Pancreas (tissue), 10 donors: ENCODE measurements at regions of chr2 and their contacts with region 1.

Region 1: DNA sequence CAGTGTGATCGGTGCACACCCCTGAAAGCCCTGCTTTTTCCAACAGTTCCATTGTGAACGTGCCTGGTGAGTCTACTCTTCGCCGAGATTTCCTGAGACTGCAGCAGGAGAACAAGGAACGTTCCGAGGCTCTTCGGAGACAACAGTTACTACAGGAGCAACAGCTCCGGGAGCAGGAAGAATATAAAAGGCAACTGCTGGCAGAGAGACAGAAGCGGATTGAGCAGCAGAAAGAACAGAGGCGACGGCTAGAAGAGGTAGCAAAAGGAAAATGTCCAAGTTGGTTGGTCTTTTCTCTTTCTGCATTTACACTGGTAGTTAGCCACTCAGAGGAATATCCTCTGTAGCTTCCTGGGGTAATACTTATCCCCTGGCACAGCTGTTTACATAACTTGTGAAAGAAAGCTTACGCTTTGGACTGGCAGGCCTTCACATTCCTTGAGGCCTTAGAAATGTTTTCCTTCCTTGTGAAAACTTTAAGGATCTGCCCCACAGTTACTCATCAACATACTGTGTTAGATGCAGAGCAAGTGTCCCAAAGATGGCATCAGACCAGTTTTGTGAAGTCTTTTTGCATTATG is 146.6 kb downstream of the MAP4K4 start:
- DNase-seq: no peak
- ATAC-seq: no peak
- H3K4me3 ChIP-seq: no peak overlapping the region
- H3K27ac ChIP-seq: no peak overlapping the region
- H3K4me1 ChIP-seq: no peaks in the 10 kb centered on the region
- H3K27me3 ChIP-seq: no peaks in the 10 kb centered on the region
- CTCF ChIP-seq: no peak

Region 2: GRCh38 chr2:101419096-101419663 is 425.0 kb before region 1 on chr2:
- intact Hi-C with region 1: loop called in 1 of 3 experiments (anchors 10 kb)
- DNase-seq: peak in 3 of 6 donors; percentile 20 to 42 (median 42)
- ATAC-seq: peak in 3 of 4 donors; percentile 79 to 87 (median 85)
- H3K4me3 ChIP-seq: no peak overlapping the region
- H3K27ac ChIP-seq: no peak overlapping the region
- H3K4me1 ChIP-seq: no peaks in the 10 kb centered on the region
- H3K27me3 ChIP-seq: no peaks in the 10 kb centered on the region
- CTCF ChIP-seq: peak in 3 of 4 donors; percentile 36 to 62 (median 50)

Region 3: DNA sequence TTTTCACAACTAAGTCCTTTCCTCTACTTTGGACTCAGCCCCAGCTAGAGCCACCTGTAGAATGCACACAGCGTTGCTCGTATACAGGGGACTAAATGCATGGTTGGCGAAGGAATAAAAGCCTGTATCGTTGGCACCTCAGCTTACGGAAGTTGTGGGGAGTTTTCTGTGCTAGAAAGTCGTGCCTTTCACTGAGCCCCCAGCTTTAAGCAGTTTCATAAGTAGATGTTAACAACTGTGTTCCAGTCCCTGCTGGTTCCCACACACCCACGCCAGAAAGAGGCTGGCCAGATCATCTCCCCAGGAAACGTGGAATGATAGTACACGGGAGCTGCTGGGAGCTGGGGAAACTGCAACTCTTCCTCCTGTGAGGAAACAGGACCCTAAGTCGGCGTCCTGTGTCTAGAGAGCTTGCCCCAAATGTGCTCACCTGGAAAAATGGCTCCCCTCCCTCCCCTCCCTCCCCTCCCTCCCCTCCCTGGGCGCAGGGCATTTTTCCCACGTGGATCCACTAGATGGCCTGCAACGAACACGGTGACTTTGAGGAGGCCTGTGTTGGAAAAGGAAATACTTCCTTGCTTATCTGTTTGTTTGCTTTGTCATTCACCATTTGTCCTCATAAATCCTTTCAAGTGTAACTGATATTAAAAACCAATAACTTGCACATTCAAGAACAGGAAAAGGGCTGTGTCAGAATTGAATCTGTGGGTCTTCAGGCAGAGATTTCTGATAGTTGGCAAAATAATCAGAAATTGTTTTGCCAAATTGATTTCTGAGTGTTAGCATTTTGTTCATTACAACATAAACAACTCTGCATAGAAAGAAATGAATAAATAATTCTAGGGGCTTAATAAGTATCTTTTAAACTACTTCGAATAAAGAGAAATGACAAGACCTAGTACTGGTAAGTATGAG is 325.3 kb before region 1 on chr2:
- intact Hi-C with region 1: loop called in 1 of 3 experiments (anchors 10 kb)
- DNase-seq: peak in 5 of 6 donors; percentile 41 to 67 (median 52)
- ATAC-seq: peak; percentile 89 to 94 (median 90)
- H3K4me3 ChIP-seq: no peak overlapping the region
- H3K27ac ChIP-seq: no peak overlapping the region
- H3K4me1 ChIP-seq: no peaks in the 10 kb centered on the region
- H3K27me3 ChIP-seq: no peaks in the 10 kb centered on the region
- CTCF ChIP-seq: peak in 3 of 4 donors; percentile 15 to 20 (median 18)

Region 4: DNA sequence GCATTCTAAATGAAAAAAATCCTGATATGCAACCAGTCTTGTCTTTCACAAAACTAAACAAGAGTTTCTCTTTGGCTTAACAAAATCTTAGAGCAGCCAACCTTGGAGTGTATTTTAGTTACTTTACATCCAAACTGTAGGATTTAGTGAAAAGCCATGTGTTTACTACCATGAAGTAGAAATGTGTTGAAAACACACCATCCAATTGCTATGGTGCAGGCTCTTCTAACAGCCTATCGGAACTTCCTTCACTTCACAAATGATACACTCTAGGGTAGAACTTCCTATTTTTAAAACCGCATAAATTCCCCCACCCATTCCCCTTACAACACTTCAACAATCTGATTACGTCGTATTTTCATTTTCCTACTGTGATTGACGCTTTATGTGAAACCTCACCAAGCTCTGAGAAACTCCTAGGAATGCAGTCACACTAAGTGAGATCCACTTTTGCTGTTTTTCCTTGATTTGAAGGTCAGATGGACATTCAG is 221.1 kb before region 1 on chr2:
- intact Hi-C with region 1: no loop called
- DNase-seq: no peak
- ATAC-seq: peak in 2 of 4 donors; percentile 58 to 66
- H3K4me3 ChIP-seq: no peak overlapping the region
- H3K27ac ChIP-seq: no peak overlapping the region
- H3K4me1 ChIP-seq: no peaks in the 10 kb centered on the region
- H3K27me3 ChIP-seq: no peaks in the 10 kb centered on the region
- CTCF ChIP-seq: no peak

Region 5: DNA sequence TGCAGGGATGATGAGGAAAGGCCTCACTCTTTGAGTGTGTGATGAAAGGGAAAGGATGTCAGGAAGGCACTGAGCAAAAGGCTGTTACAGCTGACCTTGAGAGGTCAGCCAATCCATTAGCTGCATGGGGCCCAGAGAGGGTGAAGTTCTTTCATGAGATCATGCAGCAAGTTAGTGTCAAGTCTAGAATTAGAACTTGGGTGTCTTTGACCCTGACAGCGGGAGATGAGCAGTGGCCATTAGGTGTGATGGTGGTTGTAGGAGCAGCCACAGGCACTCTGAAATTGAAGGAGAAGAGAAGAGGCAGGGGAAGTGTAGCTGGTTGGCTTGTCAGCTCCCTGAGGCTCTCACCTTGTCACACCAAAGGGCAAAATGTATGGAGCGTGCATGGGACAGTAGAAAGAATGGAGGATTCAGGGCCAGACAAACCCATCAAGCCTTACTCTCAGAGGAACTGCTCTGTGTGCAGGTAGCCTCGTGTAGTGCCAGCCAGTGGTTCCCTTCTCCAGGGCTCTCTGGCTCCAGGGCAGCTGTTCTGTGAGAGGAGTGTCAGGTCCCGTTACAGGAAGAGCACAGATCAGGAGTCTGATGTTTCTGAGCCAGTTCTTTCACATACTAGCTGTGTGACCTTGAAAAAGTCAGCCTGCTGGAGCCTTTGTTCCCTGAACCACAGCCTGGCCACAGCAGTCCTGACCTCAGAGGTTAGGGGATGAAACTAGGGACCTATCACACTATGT is 110.7 kb before region 1 on chr2:
- intact Hi-C with region 1: no loop called
- DNase-seq: no peak
- ATAC-seq: peak in 3 of 4 donors; percentile 14 to 35 (median 14)
- H3K4me3 ChIP-seq: no peak overlapping the region
- H3K27ac ChIP-seq: no peak overlapping the region
- H3K4me1 ChIP-seq: peaks cover 8 to 44% (median 19%) of the 10 kb centered on the region in 3 donors
- H3K27me3 ChIP-seq: no peaks in the 10 kb centered on the region
- CTCF ChIP-seq: no peak

Region 6: DNA sequence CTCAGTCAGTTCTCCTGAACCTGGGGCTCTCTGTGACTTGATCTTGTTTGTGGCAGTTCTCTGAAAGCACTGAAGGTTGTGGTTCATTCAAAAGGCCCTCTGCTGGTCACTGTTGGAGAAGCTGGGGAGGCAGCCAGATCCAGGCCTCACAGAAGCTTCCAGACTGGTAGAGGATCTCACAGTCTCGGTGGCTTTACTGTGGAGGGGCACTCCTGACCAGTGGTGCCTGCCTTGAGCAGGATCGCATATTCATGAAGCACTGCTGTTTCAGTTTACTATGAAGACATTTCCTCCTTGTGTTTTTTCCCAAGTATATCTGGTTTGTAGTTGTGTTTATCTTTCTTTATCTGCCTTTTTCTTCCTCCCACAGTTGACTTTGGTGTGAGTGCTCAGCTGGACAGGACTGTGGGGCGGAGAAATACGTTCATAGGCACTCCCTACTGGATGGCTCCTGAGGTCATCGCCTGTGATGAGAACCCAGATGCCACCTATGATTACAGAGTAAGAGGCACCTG is 12.7 kb before region 1 on chr2:
- intact Hi-C with region 1: no loop called
- DNase-seq: peak; percentile 56 to 79 (median 60)
- ATAC-seq: peak; percentile 80 to 95 (median 94)
- H3K4me3 ChIP-seq: no peak overlapping the region
- H3K27ac ChIP-seq: peak overlapping the region in 1 of 4 donors; percentile 44
- H3K4me1 ChIP-seq: peaks cover 0 to 10% (median 7%) of the 10 kb centered on the region in 3 donors
- H3K27me3 ChIP-seq: no peaks in the 10 kb centered on the region
- CTCF ChIP-seq: peak; percentile 41 to 65 (median 56)